MCF 10A (cell line): ENCODE measurements at regions of chr16 and their contacts with region 1.

Region 1: DNA sequence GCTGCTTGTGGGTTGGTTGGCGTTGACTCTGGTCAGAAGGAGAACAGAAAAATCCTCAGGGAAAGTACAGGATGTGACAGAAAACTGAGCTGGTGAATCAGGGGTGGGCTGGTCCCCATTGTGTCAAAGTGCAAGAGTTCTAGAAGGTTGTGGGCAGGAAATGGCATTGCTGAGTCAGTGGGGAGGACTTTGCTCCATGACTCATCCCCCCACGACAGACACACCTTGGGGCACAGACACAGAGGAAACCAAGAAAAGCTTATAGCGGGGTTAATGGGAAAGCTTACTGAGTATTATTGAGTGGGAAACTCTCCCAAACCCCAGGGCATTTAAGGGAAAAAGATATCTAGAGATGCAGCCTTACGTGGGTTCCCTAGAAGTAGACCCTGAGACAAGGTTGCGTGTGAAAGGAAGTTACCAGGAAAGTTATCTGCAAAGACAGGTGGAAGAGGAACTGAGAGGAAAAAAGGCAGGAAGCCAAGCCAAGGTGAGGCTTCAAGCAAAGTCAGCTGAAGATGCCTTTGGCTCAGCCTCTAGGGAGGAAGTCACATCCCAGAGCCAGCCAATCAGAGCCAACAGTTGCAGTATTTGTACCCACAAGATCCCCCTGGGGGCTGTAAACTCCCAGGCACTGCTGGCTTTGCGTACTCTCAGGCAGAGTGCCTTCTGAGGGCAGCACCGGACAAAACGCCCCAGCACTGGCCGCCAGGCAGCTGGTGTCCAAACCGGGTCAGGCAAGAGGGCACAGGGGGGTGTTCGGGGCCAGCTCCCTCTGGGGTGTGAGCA is 86.4 kb downstream of the FOXL1 start:
- DNase-seq: peak; percentile 98
- H3K4me3 Mint-ChIP-seq: peak overlapping the region; percentile 66
- H3K27ac Mint-ChIP-seq: peak overlapping the region; percentile 98
- H3K4me1 Mint-ChIP-seq: peaks cover 47% of the 10 kb centered on the region
- H3K27me3 Mint-ChIP-seq: no peaks in the 10 kb centered on the region
- CTCF ChIP-seq: no peak

Region 2: DNA sequence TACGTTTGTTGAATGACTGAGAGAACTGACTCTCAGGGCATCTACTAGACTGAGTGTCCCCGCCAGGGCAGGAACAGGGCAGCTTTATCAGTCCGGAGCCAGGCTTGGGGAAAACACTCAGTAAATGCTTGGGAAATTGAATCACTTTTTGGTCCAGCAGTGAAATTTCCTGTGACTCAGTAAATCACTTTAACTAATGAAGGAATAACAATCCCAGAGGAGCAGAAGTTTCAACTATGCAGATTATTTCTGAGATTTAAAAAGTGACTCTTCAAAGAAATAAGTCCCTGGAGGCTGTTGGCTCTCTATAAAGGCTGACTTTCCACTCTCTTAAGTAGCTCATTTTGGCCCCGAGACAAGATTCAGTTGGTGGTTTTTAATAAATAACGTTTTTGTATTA is 15.4 kb after region 1 on chr16:
- CTCF ChIA-PET with region 1: interaction called, 4 read pairs
- POLR2A ChIA-PET with region 1: interaction called, 19 read pairs
- intact Hi-C with region 1: loop called (anchors 2 kb)
- DNase-seq: peak; percentile 24
- H3K4me3 Mint-ChIP-seq: no peak overlapping the region
- H3K27ac Mint-ChIP-seq: no peak overlapping the region
- H3K4me1 Mint-ChIP-seq: no peaks in the 10 kb centered on the region
- H3K27me3 Mint-ChIP-seq: no peaks in the 10 kb centered on the region
- CTCF ChIP-seq: no peak

Region 3: DNA sequence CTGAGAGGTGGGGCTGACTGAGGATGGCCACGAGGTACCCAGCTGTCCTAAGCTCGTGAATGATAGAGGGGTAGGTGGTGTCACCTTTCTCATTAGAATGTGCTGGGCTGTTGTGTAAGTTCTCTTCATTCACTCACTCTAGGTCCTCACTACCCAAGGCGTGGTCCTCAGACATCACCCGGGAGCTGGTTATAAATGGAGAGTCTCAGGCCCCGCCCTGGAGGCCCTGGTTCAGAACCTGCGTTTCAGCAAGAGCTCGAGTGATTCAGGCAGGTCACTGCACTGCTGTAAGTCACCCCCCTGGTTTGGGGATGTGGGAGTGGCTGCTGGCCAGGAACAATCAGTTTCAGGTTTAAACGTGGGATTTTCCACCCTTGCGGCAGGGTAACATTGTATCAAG is 53.4 kb after region 1 on chr16:
- CTCF ChIA-PET with region 1: no interaction called
- POLR2A ChIA-PET with region 1: interaction called, 19 read pairs
- intact Hi-C with region 1: no loop called
- DNase-seq: peak; percentile 66
- H3K4me3 Mint-ChIP-seq: no peak overlapping the region
- H3K27ac Mint-ChIP-seq: peak overlapping the region; percentile 52
- H3K4me1 Mint-ChIP-seq: peaks cover 20% of the 10 kb centered on the region
- H3K27me3 Mint-ChIP-seq: no peaks in the 10 kb centered on the region
- CTCF ChIP-seq: no peak

Region 4: GRCh38 chr16:86751076-86752030 is 86.6 kb after region 1 on chr16:
- CTCF ChIA-PET with region 1: no interaction called
- POLR2A ChIA-PET with region 1: interaction called, 27 read pairs
- intact Hi-C with region 1: loop called (anchors 2 kb)
- DNase-seq: peak; percentile 85
- H3K4me3 Mint-ChIP-seq: peak overlapping the region; percentile 54
- H3K27ac Mint-ChIP-seq: peak overlapping the region; percentile 96
- H3K4me1 Mint-ChIP-seq: peaks cover 31% of the 10 kb centered on the region
- H3K27me3 Mint-ChIP-seq: no peaks in the 10 kb centered on the region
- CTCF ChIP-seq: no peak